ENCODE measurements at regions of chrX and their contacts with region 1.

Region 1: GRCh38 chrX:47613082-47613481 is 6.6 kb downstream of the SYN1 start:
- DNase-seq: no peak
- ATAC-seq: no peak
- H3K4me3 ChIP-seq: no peak overlapping the region
- H3K4me3 Mint-ChIP-seq: no peak overlapping the region
- H3K27ac ChIP-seq: no peak overlapping the region
- H3K27ac Mint-ChIP-seq: no peak overlapping the region
- H3K4me1 ChIP-seq: peaks cover 0 to 2% of the 10 kb centered on the region in 2 experiments
- H3K4me1 Mint-ChIP-seq: peaks cover 2 to 4% (median 3%) of the 10 kb centered on the region in 3 donors
- H3K27me3 ChIP-seq: no peaks in the 10 kb centered on the region
- H3K27me3 Mint-ChIP-seq: peaks cover 0 to 23% of the 10 kb centered on the region in 2 donors

Region 2: GRCh38 chrX:47623540-47624027 is 10.5 kb after region 1 on chrX:
- CTCF ChIA-PET with region 1: interaction called in 1 of 2 experiments, 3 read pairs
- POLR2A ChIA-PET with region 1: interaction called in 1 of 2 experiments, 17 read pairs
- DNase-seq: peak in 27 of 35 experiments; percentile 15 to 56 (median 38)
- ATAC-seq: peak; percentile 58 to 79 (median 62)
- H3K4me3 ChIP-seq: peak overlapping the region in 1 of 2 donors; percentile 47
- H3K4me3 Mint-ChIP-seq: peak overlapping the region; percentile 81 to 83 (median 82)
- H3K27ac ChIP-seq: no peak overlapping the region
- H3K27ac Mint-ChIP-seq: peak overlapping the region in 1 of 2 donors; percentile 55
- H3K4me1 ChIP-seq: peaks cover 3 to 29% of the 10 kb centered on the region in 2 experiments
- H3K4me1 Mint-ChIP-seq: peaks cover 17 to 26% (median 20%) of the 10 kb centered on the region in 3 donors
- H3K27me3 ChIP-seq: peaks cover 0 to 6% of the 10 kb centered on the region in 2 experiments
- H3K27me3 Mint-ChIP-seq: peaks cover 0 to 10% of the 10 kb centered on the region in 2 donors

Region 3: GRCh38 chrX:48071064-48071985 is 458.2 kb after region 1 on chrX and contains the start of gene ZNF630:
- CTCF ChIA-PET with region 1: no interaction called
- POLR2A ChIA-PET with region 1: no interaction called
- DNase-seq: peak; percentile 20 to 68 (median 40)
- ATAC-seq: peak; percentile 84 to 92 (median 92)
- H3K4me3 ChIP-seq: peak within 1 kb of the TSS; percentile 72 to 88
- H3K4me3 Mint-ChIP-seq: peak within 1 kb of the TSS; percentile 84 to 95 (median 89)
- H3K27ac ChIP-seq: peak within 1 kb of the TSS; percentile 83
- H3K27ac Mint-ChIP-seq: peak within 1 kb of the TSS; percentile 93 to 95
- H3K4me1 ChIP-seq: peaks cover 0 to 10% of the 10 kb centered on the region in 2 experiments
- H3K4me1 Mint-ChIP-seq: peaks cover 11 to 22% (median 14%) of the 10 kb centered on the region in 3 donors
- H3K27me3 ChIP-seq: no peaks in the 10 kb centered on the region
- H3K27me3 Mint-ChIP-seq: peaks cover 0 to 6% of the 10 kb centered on the region in 2 donors
- total RNA-seq, gene ZNF630: 2.1 to 3.3 (median 2.7) TPM

Measured in T-cell (primary cell).